Activated B cell treated with CpG ODN at 0.5 μM for 24 hours (primary cell): ENCODE measurements at regions of chr5 and their contacts with region 1.

Region 1: GRCh38 chr5:103475629-103476240 is 86.9 kb downstream of the NUDT12 start:
- DNase-seq: no peak
- ATAC-seq: no peak
- H3K4me3 Mint-ChIP-seq: no peak overlapping the region
- H3K27ac Mint-ChIP-seq: no peak overlapping the region
- H3K4me1 Mint-ChIP-seq: no peaks in the 10 kb centered on the region
- H3K27me3 Mint-ChIP-seq: peaks cover 2% of the 10 kb centered on the region
- CTCF ChIP-seq: no peak

Region 2: GRCh38 chr5:103232393-103232999 is 243.2 kb before region 1 on chr5:
- CTCF ChIA-PET with region 1: interaction called, 23 read pairs
- POLR2A ChIA-PET with region 1: no interaction called
- intact Hi-C with region 1: no loop called
- DNase-seq: no peak
- ATAC-seq: peak; percentile 60
- H3K4me3 Mint-ChIP-seq: no peak overlapping the region
- H3K27ac Mint-ChIP-seq: no peak overlapping the region
- H3K4me1 Mint-ChIP-seq: no peaks in the 10 kb centered on the region
- H3K27me3 Mint-ChIP-seq: peaks cover 6% of the 10 kb centered on the region
- CTCF ChIP-seq: no peak